GM10248 (cell line): ENCODE measurements at regions of chr7 and their contacts with region 1.

Region 1: DNA sequence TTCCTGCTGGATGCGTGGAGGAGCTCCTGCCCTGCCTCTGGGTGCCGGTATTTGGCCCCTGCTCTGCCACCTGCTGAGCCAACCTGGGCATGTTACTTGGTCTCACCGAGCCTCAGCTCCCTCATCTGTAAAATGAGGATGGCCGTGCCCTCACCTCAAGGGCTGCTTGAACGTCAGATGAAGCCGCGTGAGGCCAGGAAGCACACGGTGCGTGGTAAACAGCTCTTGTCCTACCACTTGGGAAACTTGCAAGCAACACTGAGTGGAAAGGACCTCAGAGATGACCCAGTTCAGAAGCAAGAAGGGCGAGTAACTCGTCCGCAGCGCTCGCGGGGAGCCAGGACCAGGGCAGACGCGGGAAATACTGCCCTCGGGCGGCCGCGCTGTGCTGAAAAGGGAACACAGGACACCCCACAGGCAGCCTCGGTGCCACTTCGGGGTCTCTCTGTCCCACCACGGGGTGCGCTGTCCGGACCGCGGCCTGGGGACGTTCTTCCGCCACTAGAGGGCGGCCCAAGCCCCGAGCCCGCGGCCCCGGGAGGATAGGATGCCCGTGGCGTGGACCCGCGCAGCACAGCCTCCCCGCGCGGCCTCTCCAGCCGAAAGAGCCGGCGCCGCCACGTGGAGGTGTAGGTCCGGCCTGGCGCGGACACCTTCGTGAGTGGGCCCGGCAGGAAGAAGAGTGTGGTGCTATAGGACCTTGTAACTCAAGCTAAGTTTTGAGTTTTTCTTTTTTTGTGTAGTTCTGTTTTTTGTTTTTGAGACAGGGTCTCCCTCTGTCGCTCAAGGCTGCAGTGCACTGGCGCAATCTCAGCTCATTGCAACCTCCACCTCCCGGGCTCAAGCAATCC is 94.1 kb downstream of the PRKAG2 start:
- DNase-seq: peak; percentile 87
- CTCF ChIP-seq: peak; percentile 79

Region 2: DNA sequence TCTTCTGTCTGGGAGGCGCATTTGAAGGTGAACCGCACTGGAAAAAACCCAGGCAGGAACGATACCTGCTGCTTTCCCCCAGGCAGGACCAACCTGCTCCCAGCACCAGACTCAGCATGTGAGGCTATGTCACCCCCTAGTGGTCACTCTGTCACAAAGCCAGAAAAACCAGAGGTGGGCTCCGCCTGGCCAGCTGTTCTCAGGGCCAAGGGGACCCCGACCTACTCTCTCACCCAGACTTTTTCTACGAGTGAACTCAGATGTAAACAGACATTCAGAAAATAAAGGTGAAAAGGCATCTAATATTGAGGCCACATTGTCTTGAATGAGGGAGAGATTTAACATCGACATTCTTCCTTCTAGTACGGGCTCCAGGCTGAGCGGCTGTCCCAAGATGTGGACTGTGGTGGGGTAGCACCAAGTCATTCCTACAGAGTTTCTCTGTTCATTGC is 23.2 kb before region 1 on chr7:
- CTCF ChIA-PET with region 1: interaction called, 22 read pairs
- POLR2A ChIA-PET with region 1: no interaction called
- DNase-seq: peak; percentile 79
- CTCF ChIP-seq: peak; percentile 86

Region 3: DNA sequence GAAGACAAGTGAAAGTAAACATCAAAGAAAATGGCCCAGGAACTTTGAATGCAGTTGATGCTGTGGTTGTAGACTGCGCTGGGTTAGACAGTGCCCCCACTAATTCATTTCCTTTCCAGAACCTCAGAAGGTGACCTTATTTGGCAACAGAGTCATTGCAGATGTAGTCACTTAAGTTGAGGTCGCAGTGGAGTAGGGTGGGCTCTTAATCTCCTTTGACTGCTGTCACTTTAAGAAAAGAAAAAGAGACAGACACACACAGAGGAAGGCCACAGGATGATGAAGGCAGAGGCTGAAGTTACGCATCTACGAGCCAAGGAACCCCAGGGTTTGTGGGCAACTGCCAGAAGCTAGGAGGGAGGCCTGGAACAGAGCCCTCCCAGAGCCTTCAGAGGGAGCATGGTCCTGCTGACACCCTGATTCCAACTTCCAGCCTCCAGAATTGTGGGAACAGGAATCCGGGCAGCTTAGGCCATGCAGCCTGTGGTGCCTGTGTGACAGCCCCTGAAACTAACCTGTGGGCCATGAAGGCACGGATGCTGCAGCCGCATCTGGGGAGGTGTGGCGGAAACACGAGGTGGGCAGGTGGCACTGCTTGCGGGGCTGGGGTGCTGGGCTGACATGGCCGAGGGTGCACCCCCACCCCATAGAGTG is 13.5 kb before region 1 on chr7:
- CTCF ChIA-PET with region 1: interaction called, 13 read pairs
- POLR2A ChIA-PET with region 1: no interaction called
- DNase-seq: peak; percentile 51
- CTCF ChIP-seq: no peak

Region 4: GRCh38 chr7:151795168-151795811 is 12.5 kb after region 1 on chr7:
- CTCF ChIA-PET with region 1: interaction called, 74 read pairs
- POLR2A ChIA-PET with region 1: no interaction called
- DNase-seq: peak; percentile 69
- CTCF ChIP-seq: no peak

Region 5: DNA sequence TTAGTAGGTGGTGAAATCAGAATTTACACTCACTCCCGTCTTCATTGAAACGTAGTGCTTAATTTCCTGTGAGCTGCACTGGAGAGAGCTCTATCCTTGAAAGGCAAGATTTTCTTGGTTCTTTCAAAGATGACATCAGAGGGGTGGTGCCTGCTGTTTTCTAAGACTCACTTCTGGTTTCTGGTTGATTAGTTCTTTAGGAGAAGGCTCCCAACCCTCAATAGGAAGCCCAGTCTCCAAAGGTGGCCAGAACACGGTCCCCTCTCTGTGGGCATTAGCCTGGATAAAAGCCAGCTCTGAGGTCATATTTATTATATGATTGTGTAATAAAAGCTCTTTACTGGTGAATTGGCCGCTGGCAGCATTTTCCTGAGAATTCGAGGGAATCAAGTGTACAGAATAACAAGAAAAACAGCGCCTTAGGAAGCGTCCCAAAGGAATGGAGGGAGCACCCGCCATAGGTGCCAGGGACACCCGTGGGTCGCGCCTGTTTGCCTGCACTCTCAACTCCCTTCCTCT is 149.6 kb after region 1 on chr7:
- CTCF ChIA-PET with region 1: interaction called, 13 read pairs
- POLR2A ChIA-PET with region 1: no interaction called
- DNase-seq: no peak
- CTCF ChIP-seq: no peak

Region 6: DNA sequence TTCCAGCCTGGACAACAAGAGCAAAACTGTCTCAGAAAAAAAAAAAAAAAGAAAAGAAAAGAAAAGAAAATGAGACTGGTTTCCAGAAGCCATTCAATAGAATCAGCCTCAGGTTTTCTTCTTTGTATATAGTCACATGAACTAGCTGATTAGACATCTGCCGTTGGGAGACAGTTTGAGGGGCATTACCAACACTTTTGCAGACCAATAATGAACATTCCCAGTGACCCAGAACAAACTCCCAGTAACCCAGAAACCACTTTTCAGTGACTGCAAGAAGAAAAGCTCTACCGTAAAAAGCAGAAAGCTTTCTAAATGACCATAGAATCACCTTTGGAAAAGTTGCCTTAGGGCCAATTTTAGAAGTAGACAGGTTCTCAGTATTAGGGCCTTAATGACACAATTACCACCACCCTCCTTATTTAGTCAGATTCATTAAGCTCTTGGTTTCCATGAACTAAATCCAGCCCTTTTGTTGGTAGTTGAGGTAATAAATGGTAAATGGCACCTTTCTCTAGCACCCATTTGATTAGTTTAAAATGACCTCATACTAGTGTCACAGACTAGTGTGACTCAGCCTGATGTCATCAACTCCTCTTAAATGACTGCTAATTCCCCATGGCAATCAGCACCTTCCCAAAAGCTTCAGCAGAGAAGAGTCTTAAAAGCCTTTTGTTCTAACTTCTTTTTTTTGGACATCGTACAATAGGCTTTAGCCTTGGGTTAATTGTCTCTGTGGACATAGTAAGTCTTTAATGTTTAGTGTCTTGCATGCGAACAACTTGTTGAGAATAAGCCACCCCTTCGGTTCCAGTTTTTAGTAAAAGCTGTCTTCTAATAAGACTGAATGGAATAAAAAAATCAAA is 926.7 kb after region 1 on chr7:
- CTCF ChIA-PET with region 1: interaction called, 14 read pairs
- POLR2A ChIA-PET with region 1: no interaction called
- DNase-seq: no peak
- CTCF ChIP-seq: no peak